ENCODE measurements at regions of chr17 and their contacts with region 1.

Region 1: GRCh38 chr17:45828628-45829027 is 16.1 kb upstream of the SPPL2C start:
- DNase-seq: no peak
- H3K4me3 Mint-ChIP-seq: no peak overlapping the region
- H3K27ac Mint-ChIP-seq: no peak overlapping the region
- H3K4me1 Mint-ChIP-seq: peaks cover 3% of the 10 kb centered on the region
- H3K27me3 Mint-ChIP-seq: peaks cover 1% of the 10 kb centered on the region

Region 2: GRCh38 chr17:45646288-45646988 is 182.2 kb before region 1 on chr17:
- CTCF ChIA-PET with region 1: interaction called, 14 read pairs
- POLR2A ChIA-PET with region 1: interaction called, 3 read pairs
- intact Hi-C with region 1: no loop called
- DNase-seq: no peak
- H3K4me3 Mint-ChIP-seq: no peak overlapping the region
- H3K27ac Mint-ChIP-seq: no peak overlapping the region
- H3K4me1 Mint-ChIP-seq: peaks cover 7% of the 10 kb centered on the region
- H3K27me3 Mint-ChIP-seq: no peaks in the 10 kb centered on the region

Region 3: GRCh38 chr17:45794840-45795239 is 33.8 kb before region 1 on chr17:
- CTCF ChIA-PET with region 1: no interaction called
- POLR2A ChIA-PET with region 1: no interaction called
- intact Hi-C with region 1: no loop called
- DNase-seq: no peak
- H3K4me3 Mint-ChIP-seq: no peak overlapping the region
- H3K27ac Mint-ChIP-seq: no peak overlapping the region
- H3K4me1 Mint-ChIP-seq: no peaks in the 10 kb centered on the region
- H3K27me3 Mint-ChIP-seq: peaks cover 36% of the 10 kb centered on the region